ENCODE measurements at regions of chr1 and their contacts with region 1.

Region 1: GRCh38 chr1:72705921-72706320 is 423.6 kb upstream of the NEGR1 start:
- DNase-seq: peak; percentile 88
- H3K4me3 ChIP-seq: peak overlapping the region; percentile 46
- H3K27ac ChIP-seq: peak overlapping the region; percentile 99
- H3K4me1 ChIP-seq: peaks cover 50% of the 10 kb centered on the region
- H3K27me3 ChIP-seq: no peaks in the 10 kb centered on the region
- CTCF ChIP-seq: no peak

Region 2: DNA sequence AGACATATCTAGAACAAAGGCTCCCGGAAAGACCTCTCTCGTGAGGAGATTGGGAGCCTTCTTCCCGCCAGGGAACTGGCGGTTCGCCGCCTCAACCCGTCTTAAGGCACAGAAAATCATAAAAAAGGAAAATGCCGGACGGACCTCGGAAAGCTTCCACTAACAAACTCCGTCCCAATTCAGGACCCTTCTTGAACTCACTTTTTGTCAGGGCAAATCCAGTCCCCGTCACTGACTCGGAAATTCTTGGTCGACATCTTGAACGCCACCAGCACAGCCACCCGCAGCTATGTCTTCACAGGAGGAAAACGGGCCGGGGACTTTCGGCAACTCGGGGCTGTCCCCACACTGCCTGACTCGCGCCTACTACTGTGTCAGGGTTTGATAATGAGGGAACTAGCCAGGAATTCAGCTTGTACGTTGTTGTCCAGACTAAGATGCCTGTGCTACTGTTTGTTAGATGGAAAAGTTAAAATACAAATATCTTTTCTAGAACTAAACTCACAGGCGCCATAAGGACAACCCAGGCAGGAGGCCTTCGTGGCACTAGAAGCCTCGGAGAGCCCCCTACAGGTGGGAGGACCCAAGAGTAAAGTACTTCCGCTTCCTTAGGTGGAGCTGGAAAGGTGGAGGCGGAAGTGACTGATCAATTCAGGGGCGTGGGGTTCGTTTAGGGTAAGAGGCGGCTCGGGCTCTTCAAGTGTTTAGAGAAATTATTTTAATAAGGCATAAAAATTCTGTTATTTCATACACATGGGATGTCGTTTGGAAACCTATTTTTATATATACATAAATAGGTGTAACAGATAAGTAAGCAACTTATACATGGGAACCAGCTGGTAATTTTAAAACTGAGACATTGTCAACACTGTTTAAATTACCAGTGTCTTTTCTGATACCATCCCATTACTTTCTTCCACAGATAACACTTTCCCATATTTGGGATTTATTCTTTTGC is 1624.9 kb before region 1 on chr1 and contains the start of gene ZRANB2:
- CTCF ChIA-PET with region 1: no interaction called
- POLR2A ChIA-PET with region 1: no interaction called
- intact Hi-C with region 1: loop called (anchors 10 kb)
- DNase-seq: peak; percentile 98
- H3K4me3 ChIP-seq: peak within 1 kb of the TSS; percentile 81
- H3K27ac ChIP-seq: peak within 1 kb of the TSS; percentile 96
- H3K4me1 ChIP-seq: peaks cover 11% of the 10 kb centered on the region
- H3K27me3 ChIP-seq: no peaks in the 10 kb centered on the region
- CTCF ChIP-seq: peak; percentile 89
- total RNA-seq, gene ZRANB2: 112 and 113 TPM in 2 replicates

Region 3: GRCh38 chr1:72186733-72187307 is 519.1 kb before region 1 on chr1:
- CTCF ChIA-PET with region 1: no interaction called
- POLR2A ChIA-PET with region 1: no interaction called
- intact Hi-C with region 1: loop called (anchors 2 kb)
- DNase-seq: peak; percentile 60
- H3K4me3 ChIP-seq: no peak overlapping the region
- H3K27ac ChIP-seq: no peak overlapping the region
- H3K4me1 ChIP-seq: peaks cover 41% of the 10 kb centered on the region
- H3K27me3 ChIP-seq: no peaks in the 10 kb centered on the region
- CTCF ChIP-seq: peak; percentile 78

Region 4: DNA sequence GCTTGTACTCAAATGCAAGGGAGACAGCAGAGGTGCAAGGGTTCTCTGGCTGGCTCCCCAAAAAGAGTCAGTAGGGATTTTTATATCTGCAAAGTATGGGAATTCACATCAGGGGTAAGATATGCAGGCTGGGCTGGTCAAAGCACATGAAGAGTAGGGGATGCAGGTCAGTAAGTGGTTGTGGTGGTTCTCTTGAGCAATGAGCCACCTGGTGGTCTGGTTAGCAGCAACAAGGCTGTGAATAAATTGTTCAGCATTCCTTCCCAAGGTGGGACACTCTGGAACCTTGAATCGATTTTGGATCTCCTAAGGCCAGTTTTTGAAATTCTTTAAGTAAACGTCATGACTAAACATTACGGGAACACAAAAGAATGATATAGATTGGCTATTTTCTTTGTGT is 139.4 kb after region 1 on chr1:
- CTCF ChIA-PET with region 1: no interaction called
- POLR2A ChIA-PET with region 1: no interaction called
- intact Hi-C with region 1: loop called (anchors 5 kb)
- DNase-seq: peak; percentile 49
- H3K4me3 ChIP-seq: no peak overlapping the region
- H3K27ac ChIP-seq: no peak overlapping the region
- H3K4me1 ChIP-seq: peaks cover 8% of the 10 kb centered on the region
- H3K27me3 ChIP-seq: no peaks in the 10 kb centered on the region
- CTCF ChIP-seq: peak; percentile 54

Measured in A673 (cell line).